Heart right ventricle (tissue), 16 donors: ENCODE measurements at regions of chr2 and their contacts with region 1.

Region 1: DNA sequence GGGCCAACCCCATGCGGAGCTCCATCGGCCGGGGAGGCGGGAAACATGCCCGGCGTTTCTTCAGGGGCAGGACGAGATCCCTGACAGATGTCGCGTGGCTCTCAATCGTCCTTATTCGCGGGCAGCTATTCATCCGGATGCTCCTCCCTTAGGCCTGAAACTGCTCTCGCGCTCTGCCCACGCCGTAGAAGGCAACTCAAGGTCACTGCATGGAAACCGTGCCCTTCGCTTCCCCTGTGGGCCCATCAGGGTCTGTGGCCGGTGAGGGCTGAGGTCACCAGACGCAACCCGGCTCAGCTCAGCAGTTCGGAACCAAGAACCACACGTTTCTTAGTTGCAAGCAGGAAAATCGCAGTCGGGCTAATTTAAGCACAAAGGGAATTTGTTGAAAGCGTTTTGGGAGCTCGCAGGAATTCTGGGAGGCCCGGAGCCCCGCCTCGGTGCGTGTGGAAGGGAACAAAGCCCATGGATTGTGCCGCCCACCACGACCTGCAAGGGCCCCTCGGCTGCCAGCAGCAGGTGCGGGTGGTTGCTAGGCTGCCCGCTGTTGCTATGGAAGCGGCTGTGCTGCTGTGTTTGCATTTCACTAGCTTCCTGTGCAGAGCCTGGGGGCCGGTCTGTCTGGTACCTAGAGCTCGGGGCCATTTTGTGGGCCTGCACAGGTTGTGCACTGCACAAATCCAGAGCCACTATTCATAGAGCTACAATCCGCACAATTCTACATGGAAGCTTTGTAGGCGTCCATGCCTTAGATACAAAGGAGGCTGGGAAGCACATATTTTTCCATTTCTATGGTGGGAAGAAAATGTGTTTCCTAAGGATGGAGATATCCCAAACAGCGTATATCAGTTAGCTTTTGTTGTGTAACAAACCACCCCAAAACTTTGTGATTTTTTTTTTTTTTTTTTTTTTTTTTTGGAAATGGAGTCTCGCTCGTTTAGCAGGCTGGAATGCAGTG is 6.0 kb upstream of the ALLC start:
- DNase-seq: peak; percentile 39 to 43
- ATAC-seq: peak; percentile 46 to 68 (median 57)
- H3K4me3 ChIP-seq: peak overlapping the region in 9 of 10 donors; percentile 12 to 57 (median 40)
- H3K27ac ChIP-seq: peak overlapping the region in 9 of 10 donors; percentile 37 to 82 (median 73)
- H3K4me1 ChIP-seq: peaks cover 0 to 19% (median 14%) of the 10 kb centered on the region in 9 donors
- H3K27me3 ChIP-seq: peaks cover 0 to 15% (median 0%) of the 10 kb centered on the region in 7 donors
- CTCF ChIP-seq: no peak

Region 2: GRCh38 chr2:2127467-2127866 is 1524.5 kb before region 1 on chr2:
- intact Hi-C with region 1: loop called in 1 of 10 experiments (anchors 10 kb)
- DNase-seq: no peak
- ATAC-seq: no peak
- H3K4me3 ChIP-seq: no peak overlapping the region
- H3K27ac ChIP-seq: no peak overlapping the region
- H3K4me1 ChIP-seq: no peaks in the 10 kb centered on the region
- H3K27me3 ChIP-seq: peaks cover 0 to 29% (median 6%) of the 10 kb centered on the region in 7 donors
- CTCF ChIP-seq: no peak

Region 3: GRCh38 chr2:3423492-3424175 is 228.3 kb before region 1 on chr2:
- intact Hi-C with region 1: loop called in 7 of 10 experiments (anchors 2 to 10 kb)
- DNase-seq: peak; percentile 57 to 79
- ATAC-seq: peak in 7 of 8 donors; percentile 49 to 67 (median 58)
- H3K4me3 ChIP-seq: no peak overlapping the region
- H3K27ac ChIP-seq: no peak overlapping the region
- H3K4me1 ChIP-seq: peaks cover 0 to 13% (median 0%) of the 10 kb centered on the region in 9 donors
- H3K27me3 ChIP-seq: no peaks in the 10 kb centered on the region
- CTCF ChIP-seq: peak; percentile 88 to 99 (median 98)

Region 4: DNA sequence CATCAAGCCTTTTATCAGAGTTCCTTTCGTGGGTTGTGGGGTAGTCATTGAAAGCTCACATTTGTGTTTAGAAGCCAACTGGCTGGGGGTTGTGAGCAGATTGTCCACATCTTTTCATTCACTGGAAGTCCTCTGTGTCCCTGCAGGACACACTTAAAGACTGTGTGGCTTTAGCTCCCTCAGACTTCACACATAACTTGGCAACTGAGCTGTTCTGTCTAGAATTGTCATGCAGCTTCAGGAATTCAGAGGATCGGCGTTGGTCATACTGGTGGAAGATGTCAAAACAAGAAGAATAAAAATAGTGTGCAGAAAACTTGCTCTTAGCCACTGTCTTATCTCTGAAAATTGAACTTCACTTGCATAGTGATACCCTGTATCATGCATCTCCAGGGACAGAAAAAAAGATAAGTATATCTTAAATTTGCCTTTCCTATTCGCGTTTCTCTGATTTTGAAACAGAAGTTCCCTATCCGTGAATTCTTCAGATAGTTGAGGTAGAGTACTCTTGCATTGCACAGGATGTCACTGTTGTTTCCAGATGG is 222.8 kb before region 1 on chr2:
- intact Hi-C with region 1: loop called in 7 of 10 experiments (anchors 2 to 10 kb)
- DNase-seq: no peak
- ATAC-seq: peak in 1 of 8 donors; percentile 23
- H3K4me3 ChIP-seq: no peak overlapping the region
- H3K27ac ChIP-seq: no peak overlapping the region
- H3K4me1 ChIP-seq: peaks cover 0 to 23% (median 11%) of the 10 kb centered on the region in 9 donors
- H3K27me3 ChIP-seq: no peaks in the 10 kb centered on the region
- CTCF ChIP-seq: no peak

Region 5: GRCh38 chr2:3575534-3576262 is 76.3 kb before region 1 on chr2:
- intact Hi-C with region 1: loop called in 4 of 10 experiments (anchors 5 to 10 kb)
- DNase-seq: peak in 1 of 2 donors; percentile 22
- ATAC-seq: peak; percentile 12 to 64 (median 26)
- H3K4me3 ChIP-seq: peak overlapping the region; percentile 72 to 95 (median 84)
- H3K27ac ChIP-seq: peak overlapping the region; percentile 70 to 94 (median 84)
- H3K4me1 ChIP-seq: peaks cover 3 to 45% (median 34%) of the 10 kb centered on the region in 9 donors
- H3K27me3 ChIP-seq: no peaks in the 10 kb centered on the region
- CTCF ChIP-seq: no peak

Region 6: GRCh38 chr2:3585261-3586109 is 66.5 kb before region 1 on chr2:
- intact Hi-C with region 1: loop called in 2 of 10 experiments (anchors 10 kb)
- DNase-seq: peak; percentile 68 to 86
- ATAC-seq: peak; percentile 87 to 95 (median 92)
- H3K4me3 ChIP-seq: peak overlapping the region in 7 of 10 donors; percentile 3 to 43 (median 22)
- H3K27ac ChIP-seq: peak overlapping the region; percentile 68 to 89 (median 77)
- H3K4me1 ChIP-seq: peaks cover 3 to 27% (median 20%) of the 10 kb centered on the region in 9 donors
- H3K27me3 ChIP-seq: no peaks in the 10 kb centered on the region
- CTCF ChIP-seq: no peak

Region 7: DNA sequence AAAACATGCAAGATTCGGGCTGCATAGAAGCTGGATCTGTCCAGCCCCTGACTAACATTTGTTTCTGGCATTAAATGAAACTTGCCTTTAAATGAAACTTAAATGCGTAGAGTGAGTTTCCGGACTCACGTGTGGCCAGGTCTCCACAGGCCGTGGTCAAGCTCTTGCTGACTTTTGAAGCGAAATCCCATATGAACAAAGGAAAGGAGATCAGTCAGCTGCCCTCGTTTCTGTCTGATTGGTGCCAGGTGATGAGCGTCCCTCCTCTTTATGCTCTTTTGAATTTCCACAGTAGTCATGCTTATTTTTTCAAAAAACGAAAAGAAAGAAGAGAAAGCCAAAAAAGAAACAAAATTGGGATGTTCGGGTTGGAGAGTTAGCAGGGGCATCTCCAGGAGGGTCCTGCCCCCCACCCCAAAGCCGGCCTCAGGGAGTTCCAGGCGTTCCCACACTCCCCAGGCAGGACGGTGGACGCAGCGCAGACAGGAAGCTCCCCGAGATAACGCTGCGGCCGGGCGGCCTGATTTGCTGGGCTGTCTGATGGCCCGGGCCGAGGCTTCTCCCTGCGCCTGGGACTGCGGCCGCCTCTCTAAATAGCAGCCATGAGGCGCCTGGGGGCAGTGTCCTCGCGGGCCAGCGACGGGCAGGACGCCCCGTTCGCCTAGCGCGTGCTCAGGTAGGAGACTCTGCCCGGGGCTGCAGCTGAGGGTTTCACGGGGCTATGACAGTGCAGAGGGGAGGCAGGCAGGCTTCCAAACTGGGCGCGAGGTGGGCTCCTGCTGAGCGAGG is 57.3 kb before region 1 on chr2 and contains the start of gene COLEC11:
- intact Hi-C with region 1: loop called in 6 of 10 experiments (anchors 2 to 10 kb)
- DNase-seq: peak; percentile 67 to 74
- ATAC-seq: peak; percentile 89 to 94 (median 92)
- H3K4me3 ChIP-seq: peak within 1 kb of the TSS in 9 of 10 donors; percentile 1 to 44 (median 41)
- H3K27ac ChIP-seq: peak within 1 kb of the TSS in 9 of 10 donors; percentile 0 to 72 (median 46)
- H3K4me1 ChIP-seq: peaks cover 0 to 14% (median 11%) of the 10 kb centered on the region in 9 donors
- H3K27me3 ChIP-seq: peaks cover 0 to 5% (median 0%) of the 10 kb centered on the region in 7 donors
- CTCF ChIP-seq: peak in 8 of 9 donors; percentile 11 to 66 (median 50)
- total RNA-seq, gene COLEC11: 2.0 to 7.2 (median 4.1) TPM

Region 8: GRCh38 chr2:3604991-3605961 is 46.7 kb before region 1 on chr2:
- intact Hi-C with region 1: no loop called
- DNase-seq: no peak
- ATAC-seq: peak in 4 of 8 donors; percentile 22 to 59 (median 42)
- H3K4me3 ChIP-seq: no peak overlapping the region
- H3K27ac ChIP-seq: no peak overlapping the region
- H3K4me1 ChIP-seq: no peaks in the 10 kb centered on the region
- H3K27me3 ChIP-seq: peaks cover 0 to 6% (median 0%) of the 10 kb centered on the region in 7 donors
- CTCF ChIP-seq: no peak